Left ventricle myocardium inferior (tissue), 1 donor: ENCODE measurements at regions of chr1 and their contacts with region 1.

Region 1: DNA sequence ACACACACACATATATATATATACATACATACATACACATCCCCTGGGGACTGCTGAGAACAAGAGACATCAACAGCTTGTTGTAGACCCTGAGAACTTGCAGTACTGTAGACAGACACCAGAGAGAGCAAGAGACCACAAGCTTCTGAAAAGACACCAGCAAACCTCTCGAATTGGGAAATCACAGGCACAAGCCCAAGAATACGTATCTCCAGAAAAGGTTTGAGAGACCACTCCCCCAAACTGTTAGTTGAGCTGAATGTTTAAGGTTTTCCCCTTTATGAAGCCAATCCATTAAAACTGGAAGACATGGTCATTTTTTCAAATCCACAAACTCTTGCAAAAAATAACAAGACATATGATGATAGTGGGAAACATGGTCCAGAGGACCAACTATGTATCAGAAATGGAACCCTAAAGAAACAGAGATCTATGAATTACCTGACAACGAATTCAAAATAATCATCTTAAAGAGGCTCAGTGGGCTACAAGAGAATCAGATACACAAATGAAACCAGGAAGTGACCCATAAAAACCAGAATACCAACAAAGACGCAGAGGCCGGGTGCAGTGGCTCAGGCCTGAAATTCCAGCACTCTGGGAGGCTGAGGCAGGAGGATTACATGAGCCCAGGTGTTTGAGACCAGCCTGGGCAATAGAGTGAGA is 45.1 kb downstream of the SLC2A1 start:
- DNase-seq: no peak
- H3K4me3 ChIP-seq: no peak overlapping the region
- H3K27ac ChIP-seq: no peak overlapping the region
- H3K4me1 ChIP-seq: no peaks in the 10 kb centered on the region
- H3K27me3 ChIP-seq: no peaks in the 10 kb centered on the region
- CTCF ChIP-seq: peak; percentile 88

Region 2: GRCh38 chr1:41662061-41662764 is 1251.3 kb before region 1 on chr1:
- intact Hi-C with region 1: no loop called
- DNase-seq: peak; percentile 65
- H3K4me3 ChIP-seq: peak overlapping the region; percentile 80
- H3K27ac ChIP-seq: peak overlapping the region; percentile 92
- H3K4me1 ChIP-seq: peaks cover 32% of the 10 kb centered on the region
- H3K27me3 ChIP-seq: no peaks in the 10 kb centered on the region
- CTCF ChIP-seq: no peak

Region 3: DNA sequence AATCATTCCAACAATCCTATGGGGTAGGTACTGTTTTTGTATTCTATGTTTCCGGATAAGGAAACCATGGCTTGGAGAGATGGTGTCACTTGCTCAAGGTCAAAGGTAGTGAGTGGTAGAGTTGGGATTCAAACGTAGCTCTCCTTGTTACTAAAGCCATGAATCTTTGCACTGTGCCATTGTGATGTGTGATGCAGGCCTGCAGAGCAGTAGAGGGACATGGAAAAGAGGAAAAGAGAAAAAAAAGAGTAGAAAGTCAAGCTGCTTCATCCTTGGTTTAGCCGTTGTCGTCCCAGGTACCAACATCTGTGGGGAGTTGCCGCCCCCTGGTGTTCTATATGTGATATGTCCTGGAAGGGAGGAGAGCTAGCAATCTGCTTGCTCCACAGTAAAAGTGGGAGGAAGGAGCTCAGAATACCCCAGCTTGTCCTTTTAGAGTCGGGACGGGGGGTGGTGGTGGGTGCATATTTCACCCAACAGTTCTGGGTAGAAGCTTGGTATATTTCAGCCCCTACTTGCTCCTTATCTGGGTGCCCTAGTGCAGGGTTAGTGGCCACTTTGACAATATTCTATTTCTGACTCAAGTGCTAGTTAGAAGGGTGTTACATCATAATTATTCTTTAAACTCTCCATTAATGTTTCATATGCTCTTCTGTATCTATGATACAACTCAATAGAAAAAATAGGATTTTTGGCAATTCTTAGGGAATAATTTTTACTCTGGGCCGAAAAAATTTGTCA is 160.1 kb after region 1 on chr1:
- intact Hi-C with region 1: loop called (anchors 2 kb)
- DNase-seq: peak; percentile 70
- H3K4me3 ChIP-seq: no peak overlapping the region
- H3K27ac ChIP-seq: peak overlapping the region; percentile 50
- H3K4me1 ChIP-seq: peaks cover 11% of the 10 kb centered on the region
- H3K27me3 ChIP-seq: no peaks in the 10 kb centered on the region
- CTCF ChIP-seq: peak; percentile 88